A673 (cell line): ENCODE measurements at regions of chr3 and their contacts with region 1.

Region 1: DNA sequence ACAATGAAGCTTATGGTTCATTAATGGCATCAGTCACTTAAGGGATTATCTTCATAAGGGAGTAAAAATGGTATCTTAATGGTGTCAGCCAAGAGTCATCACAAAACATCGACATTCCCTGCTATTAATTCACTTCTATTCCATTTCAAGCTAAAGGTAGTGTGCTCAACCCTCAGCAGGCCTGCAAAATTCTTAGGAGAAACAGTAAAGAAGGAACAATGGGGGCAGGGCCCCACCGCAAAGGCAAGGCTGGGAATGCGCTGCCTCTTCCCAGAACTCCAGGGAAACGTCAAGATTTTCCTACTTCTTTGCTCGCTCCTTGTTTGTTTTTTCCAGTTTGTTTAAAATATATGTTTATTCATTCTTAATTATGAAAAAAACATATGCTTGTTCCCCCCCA is 187.3 kb upstream of the TSC22D2 start:
- DNase-seq: peak; percentile 40
- H3K4me3 ChIP-seq: peak overlapping the region; percentile 17
- H3K27ac ChIP-seq: no peak overlapping the region
- H3K4me1 ChIP-seq: peaks cover 24% of the 10 kb centered on the region
- H3K27me3 ChIP-seq: no peaks in the 10 kb centered on the region
- CTCF ChIP-seq: no peak

Region 2: DNA sequence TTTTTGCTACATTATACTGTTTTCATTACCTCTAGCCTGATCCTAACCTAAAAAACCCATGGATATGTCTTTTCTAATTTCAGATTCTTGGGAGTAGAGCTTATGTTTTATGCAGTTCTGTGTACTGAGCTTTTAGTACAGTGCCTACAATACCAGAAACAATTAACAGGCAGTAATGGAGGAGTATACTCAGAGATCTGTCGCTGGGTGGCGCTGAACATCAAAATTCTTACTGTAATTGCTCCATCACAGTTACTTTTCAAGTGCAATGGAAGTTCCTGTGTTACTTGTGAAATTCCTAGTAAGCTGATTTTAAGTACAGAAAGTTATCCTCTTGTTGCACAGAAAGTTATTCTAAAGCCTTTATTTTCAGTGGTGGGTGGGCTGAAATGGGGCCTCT is 340.9 kb before region 1 on chr3:
- CTCF ChIA-PET with region 1: interaction called, 6 read pairs
- POLR2A ChIA-PET with region 1: no interaction called
- intact Hi-C with region 1: loop called (anchors 5 kb)
- DNase-seq: peak; percentile 78
- H3K4me3 ChIP-seq: no peak overlapping the region
- H3K27ac ChIP-seq: no peak overlapping the region
- H3K4me1 ChIP-seq: no peaks in the 10 kb centered on the region
- H3K27me3 ChIP-seq: no peaks in the 10 kb centered on the region
- CTCF ChIP-seq: peak; percentile 85

Region 3: DNA sequence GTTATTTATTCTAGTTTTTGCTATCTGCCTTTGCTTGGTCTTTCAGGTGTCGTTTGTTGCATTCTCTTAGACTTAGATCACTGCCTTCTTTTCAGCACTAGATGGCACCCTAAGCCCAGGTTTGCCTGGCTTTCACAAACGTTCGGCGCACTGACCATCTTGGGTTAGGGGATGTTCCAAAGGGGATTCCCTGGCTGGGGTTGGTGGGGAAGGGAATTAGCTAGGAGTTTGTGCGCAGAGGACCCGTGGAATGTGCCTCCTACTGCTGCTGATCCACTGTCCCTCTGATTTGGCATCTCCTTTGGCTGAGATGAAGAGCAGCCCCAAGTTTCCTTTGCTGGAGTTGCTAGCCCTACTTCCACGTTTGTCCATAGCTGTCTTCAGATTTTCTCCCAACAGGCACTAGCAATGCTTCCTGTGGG is 284.0 kb before region 1 on chr3:
- CTCF ChIA-PET with region 1: interaction called, 4 read pairs
- POLR2A ChIA-PET with region 1: no interaction called
- intact Hi-C with region 1: loop called (anchors 1 kb)
- DNase-seq: peak; percentile 82
- H3K4me3 ChIP-seq: no peak overlapping the region
- H3K27ac ChIP-seq: no peak overlapping the region
- H3K4me1 ChIP-seq: no peaks in the 10 kb centered on the region
- H3K27me3 ChIP-seq: no peaks in the 10 kb centered on the region
- CTCF ChIP-seq: peak; percentile 86

Region 4: GRCh38 chr3:149969940-149970715 is 250.7 kb before region 1 on chr3:
- CTCF ChIA-PET with region 1: interaction called, 6 read pairs
- POLR2A ChIA-PET with region 1: no interaction called
- intact Hi-C with region 1: loop called (anchors 1 kb)
- DNase-seq: peak; percentile 91
- H3K4me3 ChIP-seq: peak overlapping the region; percentile 83
- H3K27ac ChIP-seq: peak overlapping the region; percentile 95
- H3K4me1 ChIP-seq: peaks cover 29% of the 10 kb centered on the region
- H3K27me3 ChIP-seq: no peaks in the 10 kb centered on the region
- CTCF ChIP-seq: no peak

Region 5: GRCh38 chr3:150329408-150329807 is 108.6 kb after region 1 on chr3:
- CTCF ChIA-PET with region 1: no interaction called
- POLR2A ChIA-PET with region 1: no interaction called
- intact Hi-C with region 1: no loop called
- DNase-seq: no peak
- H3K4me3 ChIP-seq: no peak overlapping the region
- H3K27ac ChIP-seq: no peak overlapping the region
- H3K4me1 ChIP-seq: no peaks in the 10 kb centered on the region
- H3K27me3 ChIP-seq: no peaks in the 10 kb centered on the region
- CTCF ChIP-seq: no peak